ENCODE measurements at regions of chr6 and their contacts with region 1.

Region 1: GRCh38 chr6:56223995-56224394 is 23.4 kb downstream of the COL21A1 start:
- DNase-seq: no peak
- H3K4me3 ChIP-seq: no peak overlapping the region
- H3K27ac ChIP-seq: no peak overlapping the region
- H3K4me1 ChIP-seq: peaks cover 0 to 3% (median 0%) of the 10 kb centered on the region in 4 donors
- H3K27me3 ChIP-seq: no peaks in the 10 kb centered on the region
- CTCF ChIP-seq: no peak
- EP300 ChIP-seq: no peak
- POLR2A ChIP-seq: no peak

Region 2: GRCh38 chr6:56062836-56063235 is 161.2 kb before region 1 on chr6:
- in situ Hi-C with region 1: no loop called
- intact Hi-C with region 1: no loop called
- DNase-seq: no peak
- H3K4me3 ChIP-seq: no peak overlapping the region
- H3K27ac ChIP-seq: no peak overlapping the region
- H3K4me1 ChIP-seq: no peaks in the 10 kb centered on the region
- H3K27me3 ChIP-seq: no peaks in the 10 kb centered on the region
- CTCF ChIP-seq: no peak
- EP300 ChIP-seq: no peak
- POLR2A ChIP-seq: no peak

Region 3: DNA sequence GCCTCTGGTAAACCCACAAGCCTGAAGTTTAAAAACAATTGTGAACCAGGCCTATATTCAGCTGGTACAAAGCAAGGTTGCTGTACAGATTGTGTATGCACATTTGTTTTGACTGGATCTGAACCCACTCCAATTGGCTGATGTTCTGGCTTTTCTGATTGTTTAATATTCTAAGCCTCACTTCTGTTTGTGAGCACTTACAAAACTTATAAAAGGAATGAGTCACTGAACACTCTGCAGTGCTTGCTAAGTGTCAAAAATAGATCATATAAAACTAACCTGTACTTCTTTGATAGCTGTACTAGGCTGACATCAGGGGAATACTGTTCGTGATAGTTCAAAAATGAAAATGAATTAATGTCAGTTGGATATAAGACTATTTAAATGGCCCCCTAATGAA is 11.2 kb after region 1 on chr6:
- in situ Hi-C with region 1: no loop called
- intact Hi-C with region 1: loop called (anchors 1 kb)
- DNase-seq: no peak
- H3K4me3 ChIP-seq: no peak overlapping the region
- H3K27ac ChIP-seq: peak overlapping the region in 2 of 4 donors; percentile 24
- H3K4me1 ChIP-seq: peaks cover 0 to 3% (median 0%) of the 10 kb centered on the region in 4 donors
- H3K27me3 ChIP-seq: no peaks in the 10 kb centered on the region
- CTCF ChIP-seq: no peak
- EP300 ChIP-seq: no peak
- POLR2A ChIP-seq: no peak

Region 4: DNA sequence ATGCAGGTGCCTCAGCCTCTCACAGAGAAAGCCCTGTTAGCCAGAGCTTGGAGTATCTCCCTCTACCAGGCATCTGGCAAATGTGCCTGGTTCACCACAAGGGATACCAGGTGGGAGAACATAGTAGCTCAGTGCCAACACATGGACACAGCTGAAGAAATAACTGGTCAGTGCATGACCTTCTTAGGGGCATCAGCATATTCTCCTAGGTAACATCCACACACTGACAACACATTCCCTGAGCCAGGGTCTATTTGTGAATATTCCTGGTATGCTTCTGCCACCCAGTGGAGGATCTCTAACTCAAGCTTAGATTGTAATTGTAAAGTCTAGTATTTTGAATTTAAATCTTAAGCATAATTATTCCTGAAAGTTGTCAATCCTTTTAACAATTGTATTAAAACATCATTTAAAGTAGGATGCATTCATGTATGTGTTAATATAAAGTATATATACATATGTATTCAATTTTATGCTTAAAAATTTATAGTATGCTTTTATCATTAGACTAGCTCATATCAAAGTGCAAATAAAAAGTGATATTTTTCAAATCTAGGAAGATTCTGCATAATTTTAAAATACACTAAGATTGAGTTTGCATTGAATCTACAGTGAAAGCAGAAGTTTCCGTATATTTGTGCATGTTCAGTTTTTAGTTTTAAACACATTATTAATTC is 68.6 kb after region 1 on chr6:
- in situ Hi-C with region 1: no loop called
- intact Hi-C with region 1: no loop called
- DNase-seq: peak; percentile 9
- H3K4me3 ChIP-seq: no peak overlapping the region
- H3K27ac ChIP-seq: no peak overlapping the region
- H3K4me1 ChIP-seq: no peaks in the 10 kb centered on the region
- H3K27me3 ChIP-seq: no peaks in the 10 kb centered on the region
- CTCF ChIP-seq: peak; percentile 46 to 65 (median 61)
- EP300 ChIP-seq: no peak
- POLR2A ChIP-seq: no peak